Activated naive CD4-positive, alpha-beta T cell treated with anti-CD3 and anti-CD28 coated beads for 36 hours (primary cell): ENCODE measurements at regions of chrX and their contacts with region 1.

Region 1: GRCh38 chrX:56563231-56564161 is at the start of gene UBQLN2:
- DNase-seq: peak; percentile 81
- H3K4me3 Mint-ChIP-seq: peak within 1 kb of the TSS; percentile 91
- H3K27ac Mint-ChIP-seq: peak within 1 kb of the TSS; percentile 100
- H3K4me1 Mint-ChIP-seq: peaks cover 1% of the 10 kb centered on the region
- H3K27me3 Mint-ChIP-seq: no peaks in the 10 kb centered on the region
- total RNA-seq, gene UBQLN2: 67.2 to 67.3 TPM

Region 2: GRCh38 chrX:55717521-55718497 is 845.7 kb before region 1 on chrX and contains the start of gene RRAGB:
- CTCF ChIA-PET with region 1: no interaction called
- intact Hi-C with region 1: loop called (anchors 5 kb)
- DNase-seq: peak; percentile 91
- H3K4me3 Mint-ChIP-seq: peak within 1 kb of the TSS; percentile 80
- H3K27ac Mint-ChIP-seq: peak within 1 kb of the TSS; percentile 91
- H3K4me1 Mint-ChIP-seq: peaks cover 32% of the 10 kb centered on the region
- H3K27me3 Mint-ChIP-seq: no peaks in the 10 kb centered on the region
- total RNA-seq, gene RRAGB: 3.4 to 4.0 TPM

Region 3: DNA sequence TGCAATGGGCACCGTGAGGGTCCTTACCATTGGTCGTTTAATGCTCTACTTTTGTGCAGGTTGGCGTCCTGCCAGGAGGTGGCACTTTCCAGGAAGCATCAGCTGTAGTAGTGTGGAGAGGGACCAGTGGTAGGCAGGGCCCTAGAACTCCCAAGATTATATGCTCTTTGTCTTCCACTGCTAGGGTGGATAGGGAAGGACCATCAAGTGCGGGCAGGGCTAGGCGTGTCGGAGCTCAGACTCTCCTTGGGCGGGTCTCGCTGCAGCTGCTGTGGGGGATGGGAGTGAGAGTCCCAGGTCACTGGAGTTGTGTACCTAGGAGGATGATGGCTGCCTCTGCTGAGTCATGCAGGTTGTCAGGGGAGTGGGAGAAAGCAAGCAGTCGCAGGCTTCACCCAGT is 196.6 kb before region 1 on chrX:
- CTCF ChIA-PET with region 1: no interaction called
- intact Hi-C with region 1: loop called (anchors 1 kb)
- DNase-seq: peak; percentile 14
- H3K4me3 Mint-ChIP-seq: no peak overlapping the region
- H3K27ac Mint-ChIP-seq: peak overlapping the region; percentile 41
- H3K4me1 Mint-ChIP-seq: peaks cover 51% of the 10 kb centered on the region
- H3K27me3 Mint-ChIP-seq: no peaks in the 10 kb centered on the region

Region 4: DNA sequence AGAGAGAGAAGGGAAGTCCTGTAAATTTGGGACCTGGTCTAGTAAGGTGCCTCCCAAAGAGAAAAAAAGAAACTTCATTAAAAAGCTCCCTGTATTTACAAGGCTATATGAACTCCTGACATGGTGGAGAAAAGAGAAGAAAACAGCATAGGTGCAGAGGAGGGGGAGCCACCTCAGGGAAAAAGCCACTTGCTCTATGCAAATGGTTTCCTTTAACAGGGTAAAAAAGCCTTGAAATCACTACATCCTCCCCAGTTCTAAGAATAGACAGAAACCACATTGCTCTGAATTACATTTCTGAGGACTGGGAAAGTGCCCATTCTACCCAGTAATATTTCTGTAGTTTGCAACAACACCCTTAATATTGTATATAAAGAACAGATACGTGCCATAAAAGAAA is 165.9 kb before region 1 on chrX:
- CTCF ChIA-PET with region 1: no interaction called
- intact Hi-C with region 1: loop called (anchors 1 kb)
- DNase-seq: peak; percentile 56
- H3K4me3 Mint-ChIP-seq: peak overlapping the region; percentile 60
- H3K27ac Mint-ChIP-seq: peak overlapping the region; percentile 91
- H3K4me1 Mint-ChIP-seq: peaks cover 62% of the 10 kb centered on the region
- H3K27me3 Mint-ChIP-seq: no peaks in the 10 kb centered on the region

Region 5: GRCh38 chrX:56813318-56813837 is 249.9 kb after region 1 on chrX:
- CTCF ChIA-PET with region 1: no interaction called
- intact Hi-C with region 1: loop called (anchors 5 kb)
- DNase-seq: peak; percentile 56
- H3K4me3 Mint-ChIP-seq: peak overlapping the region; percentile 69
- H3K27ac Mint-ChIP-seq: peak overlapping the region; percentile 95
- H3K4me1 Mint-ChIP-seq: peaks cover 36% of the 10 kb centered on the region
- H3K27me3 Mint-ChIP-seq: no peaks in the 10 kb centered on the region

Region 6: DNA sequence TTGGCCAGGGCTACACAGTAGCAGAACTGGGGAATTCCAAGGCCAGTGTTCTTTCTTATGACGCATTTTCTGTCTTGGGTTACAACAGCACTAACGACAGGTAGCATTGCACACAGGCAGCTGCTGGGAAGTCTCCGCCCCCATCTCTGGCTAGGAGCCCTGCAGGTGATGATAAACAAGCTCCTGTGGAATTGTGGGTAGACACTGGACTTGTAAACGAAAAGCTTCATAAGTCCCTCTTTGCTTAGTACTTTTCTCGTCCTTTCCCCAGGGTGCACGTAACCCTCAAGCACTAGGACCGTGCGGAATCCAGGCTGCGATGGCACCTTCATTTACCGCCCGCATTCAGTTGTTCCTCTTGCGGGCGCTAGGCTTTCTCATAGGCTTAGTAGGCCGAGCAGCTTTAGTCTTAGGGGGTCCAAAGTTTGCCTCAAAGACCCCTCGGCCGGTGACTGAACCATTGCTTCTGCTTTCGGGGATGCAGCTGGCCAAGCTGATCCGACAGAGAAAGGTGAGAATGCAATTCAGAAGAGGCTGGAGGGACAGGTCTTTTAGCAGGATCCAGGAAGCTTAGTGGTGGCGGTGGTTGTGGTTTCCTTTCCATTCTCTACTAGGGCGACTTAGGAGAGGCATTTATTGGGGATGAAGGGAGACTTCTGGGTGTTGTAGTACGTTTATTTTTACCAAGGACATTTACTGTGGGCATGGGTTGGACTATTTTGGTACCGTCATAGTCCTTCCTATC is 723.2 kb after region 1 on chrX and contains the start of gene FAAH2:
- CTCF ChIA-PET with region 1: no interaction called
- intact Hi-C with region 1: loop called (anchors 2 kb)
- DNase-seq: peak; percentile 83
- H3K4me3 Mint-ChIP-seq: peak within 1 kb of the TSS; percentile 92
- H3K27ac Mint-ChIP-seq: peak within 1 kb of the TSS; percentile 95
- H3K4me1 Mint-ChIP-seq: peaks cover 29% of the 10 kb centered on the region
- H3K27me3 Mint-ChIP-seq: no peaks in the 10 kb centered on the region
- total RNA-seq, gene FAAH2: 9.6 to 12.0 TPM